Posterior cingulate gyrus (tissue), 11 donors: ENCODE measurements at regions of chr22 and their contacts with region 1.

Region 1: GRCh38 chr22:46116491-46116958 is 33.8 kb upstream of the PPARA start:
- DNase-seq: peak; percentile 84 to 98 (median 95)

Region 2: GRCh38 chr22:45994491-45995404 is 121.8 kb before region 1 on chr22:
- intact Hi-C with region 1: loop called (anchors 1 kb)
- DNase-seq: peak; percentile 72 to 98 (median 90)

Region 3: DNA sequence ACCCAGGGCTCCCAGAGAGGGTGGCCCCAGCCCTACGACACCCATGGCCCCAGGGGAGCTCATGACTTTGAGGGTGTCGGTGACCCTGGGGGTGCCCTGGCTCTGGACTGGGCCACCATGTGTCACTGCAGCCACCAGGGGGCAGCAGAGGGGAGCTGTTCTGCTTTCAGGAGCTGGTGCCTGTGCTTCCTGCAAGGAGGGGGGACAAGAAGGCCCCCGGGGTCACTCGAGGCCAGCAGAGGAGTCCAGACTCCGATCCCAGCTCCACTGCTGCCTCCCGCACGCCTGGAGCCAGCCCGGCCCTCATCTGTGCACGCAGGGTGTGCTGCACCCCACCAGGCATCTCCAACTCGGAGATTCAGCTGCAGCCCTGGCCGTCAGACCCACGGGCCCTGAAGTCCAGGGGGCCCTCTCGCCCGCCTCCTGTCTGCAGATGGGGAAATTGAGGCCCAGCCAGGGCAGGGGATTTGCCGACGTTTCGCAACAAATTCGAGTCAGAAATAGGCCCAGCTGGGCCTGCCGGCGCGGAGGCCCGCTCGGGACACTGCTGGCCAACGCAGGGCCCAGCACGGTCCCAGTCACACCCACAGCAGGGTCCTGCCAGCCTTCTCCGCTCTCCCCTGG is 110.0 kb before region 1 on chr22:
- intact Hi-C with region 1: loop called (anchors 1 kb)
- DNase-seq: peak; percentile 81 to 99 (median 94)